CD4-positive, alpha-beta T cell (primary cell): ENCODE measurements at regions of chr17 and their contacts with region 1.

Region 1: GRCh38 chr17:7687908-7688807 is at the start of gene WRAP53:
- DNase-seq: peak; percentile 93 to 98 (median 95)
- ATAC-seq: peak; percentile 75
- H3K4me3 ChIP-seq: peak within 1 kb of the TSS; percentile 72
- H3K4me3 Mint-ChIP-seq: peak within 1 kb of the TSS; percentile 99
- H3K27ac ChIP-seq: peak within 1 kb of the TSS; percentile 96 to 98
- H3K27ac Mint-ChIP-seq: peak within 1 kb of the TSS; percentile 100
- H3K4me1 ChIP-seq: peaks cover 38% of the 10 kb centered on the region
- H3K4me1 Mint-ChIP-seq: peaks cover 46% of the 10 kb centered on the region
- H3K27me3 ChIP-seq: no peaks in the 10 kb centered on the region
- H3K27me3 Mint-ChIP-seq: peaks cover 7% of the 10 kb centered on the region
- CTCF ChIP-seq: peak; percentile 100
- total RNA-seq, gene WRAP53: 3.9 to 4.0 TPM

Region 2: DNA sequence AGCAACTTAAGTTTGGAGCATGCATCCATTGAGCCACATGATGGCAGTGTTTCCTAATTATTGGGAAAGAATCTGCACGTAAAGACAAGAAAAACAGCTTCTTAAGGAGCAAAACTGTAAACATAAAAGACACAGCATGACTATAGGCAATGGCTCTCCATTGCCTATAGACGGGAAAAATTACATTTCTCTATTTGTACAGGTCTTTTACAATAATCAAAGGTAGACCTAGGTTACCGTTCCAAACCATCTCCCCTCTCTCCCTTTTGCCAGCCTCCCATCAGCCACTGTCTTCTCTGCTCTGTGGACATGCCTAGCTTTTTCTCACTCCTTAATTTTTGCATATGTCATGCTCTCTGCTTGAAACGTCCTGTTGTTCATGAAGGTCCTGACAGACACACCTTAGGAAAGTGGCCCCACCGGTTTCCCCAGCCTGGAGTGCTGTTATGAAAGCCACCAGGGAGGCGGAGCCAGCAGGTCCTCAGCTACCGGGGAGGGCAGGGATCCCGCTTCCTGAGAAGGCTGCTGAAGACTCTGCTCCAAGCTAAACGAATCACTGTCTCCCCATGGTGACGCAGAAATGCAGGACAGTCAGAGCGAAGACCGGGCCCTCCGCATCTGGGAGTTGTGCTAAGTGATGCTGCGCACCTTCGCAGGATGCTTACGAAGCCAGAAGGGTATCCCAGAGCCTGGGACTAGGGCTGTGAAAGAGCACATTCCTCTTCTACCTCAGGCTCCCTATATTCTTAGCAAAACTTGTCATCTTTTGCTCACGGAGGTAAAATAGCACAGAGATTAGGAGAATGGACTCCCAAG is 642.0 kb before region 1 on chr17:
- CTCF ChIA-PET with region 1: no interaction called
- POLR2A ChIA-PET with region 1: interaction called, 25 read pairs
- intact Hi-C with region 1: loop called in 1 of 2 experiments (anchors 10 kb)
- DNase-seq: peak in 9 of 14 experiments; percentile 31 to 89 (median 49)
- ATAC-seq: peak; percentile 53
- H3K4me3 ChIP-seq: peak overlapping the region; percentile 55
- H3K4me3 Mint-ChIP-seq: peak overlapping the region; percentile 90
- H3K27ac ChIP-seq: peak overlapping the region; percentile 64 to 68
- H3K27ac Mint-ChIP-seq: peak overlapping the region; percentile 94
- H3K4me1 ChIP-seq: peaks cover 49% of the 10 kb centered on the region
- H3K4me1 Mint-ChIP-seq: peaks cover 44% of the 10 kb centered on the region
- H3K27me3 ChIP-seq: peaks cover 0 to 5% of the 10 kb centered on the region in 2 experiments
- H3K27me3 Mint-ChIP-seq: no peaks in the 10 kb centered on the region
- CTCF ChIP-seq: peak; percentile 80

Region 3: DNA sequence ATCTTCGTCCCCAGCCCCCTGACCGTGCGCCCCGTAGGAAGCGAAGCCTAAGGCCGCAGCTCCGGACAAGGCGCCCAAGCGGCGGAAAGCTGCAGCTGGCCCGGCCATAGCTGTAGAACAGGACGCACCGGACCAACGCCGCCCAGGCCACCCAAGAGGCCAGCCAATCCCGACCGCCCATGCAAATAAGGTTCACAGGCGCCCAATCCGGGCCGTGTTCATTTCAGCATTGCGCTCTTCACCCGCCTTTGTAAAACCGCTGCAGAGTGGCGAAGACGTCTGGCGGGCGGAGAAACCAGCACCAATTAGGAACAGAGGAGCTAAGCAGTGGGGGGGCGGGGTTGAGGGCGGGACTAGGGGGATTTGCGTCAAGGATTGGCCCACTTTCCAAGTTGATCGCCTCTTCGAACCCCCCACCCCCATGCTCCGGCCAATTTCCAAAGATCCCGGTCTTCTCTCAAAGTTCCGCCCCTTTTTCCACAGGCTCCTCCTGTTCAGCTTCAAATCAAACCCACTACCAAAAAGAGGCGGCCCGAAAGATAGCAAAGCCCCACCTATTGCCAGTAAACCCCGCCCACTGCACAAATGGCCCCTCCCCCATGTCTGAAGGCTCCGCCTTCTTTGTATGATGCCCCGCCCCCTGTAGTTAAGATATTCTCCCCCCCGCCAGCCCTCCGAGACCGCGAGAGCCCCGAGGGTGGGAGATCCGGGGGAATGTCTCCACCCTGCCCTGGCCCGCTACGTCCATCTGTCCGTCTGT is 284.0 kb before region 1 on chr17 and contains the start of gene TMEM256:
- CTCF ChIA-PET with region 1: no interaction called
- POLR2A ChIA-PET with region 1: interaction called, 17 read pairs
- intact Hi-C with region 1: no loop called
- DNase-seq: peak; percentile 90 to 99 (median 94)
- ATAC-seq: peak; percentile 88
- H3K4me3 ChIP-seq: peak within 1 kb of the TSS; percentile 77
- H3K4me3 Mint-ChIP-seq: peak within 1 kb of the TSS; percentile 98
- H3K27ac ChIP-seq: peak within 1 kb of the TSS in 1 of 2 donors; percentile 82
- H3K27ac Mint-ChIP-seq: peak within 1 kb of the TSS; percentile 87
- H3K4me1 ChIP-seq: peaks cover 36% of the 10 kb centered on the region
- H3K4me1 Mint-ChIP-seq: peaks cover 31% of the 10 kb centered on the region
- H3K27me3 ChIP-seq: peaks cover 0 to 5% of the 10 kb centered on the region in 2 experiments
- H3K27me3 Mint-ChIP-seq: no peaks in the 10 kb centered on the region
- CTCF ChIP-seq: no peak
- total RNA-seq, gene TMEM256: 29.0 to 29.4 TPM

Region 4: GRCh38 chr17:7561028-7561575 is 127.1 kb before region 1 on chr17:
- CTCF ChIA-PET with region 1: interaction called, 18 read pairs
- POLR2A ChIA-PET with region 1: interaction called, 47 read pairs
- intact Hi-C with region 1: no loop called
- DNase-seq: peak; percentile 62 to 89 (median 77)
- ATAC-seq: peak; percentile 62
- H3K4me3 ChIP-seq: peak overlapping the region; percentile 91
- H3K4me3 Mint-ChIP-seq: peak overlapping the region; percentile 95
- H3K27ac ChIP-seq: peak overlapping the region; percentile 88 to 96
- H3K27ac Mint-ChIP-seq: peak overlapping the region; percentile 93
- H3K4me1 ChIP-seq: peaks cover 66% of the 10 kb centered on the region
- H3K4me1 Mint-ChIP-seq: peaks cover 40% of the 10 kb centered on the region
- H3K27me3 ChIP-seq: no peaks in the 10 kb centered on the region
- H3K27me3 Mint-ChIP-seq: no peaks in the 10 kb centered on the region
- CTCF ChIP-seq: peak; percentile 89

Region 5: DNA sequence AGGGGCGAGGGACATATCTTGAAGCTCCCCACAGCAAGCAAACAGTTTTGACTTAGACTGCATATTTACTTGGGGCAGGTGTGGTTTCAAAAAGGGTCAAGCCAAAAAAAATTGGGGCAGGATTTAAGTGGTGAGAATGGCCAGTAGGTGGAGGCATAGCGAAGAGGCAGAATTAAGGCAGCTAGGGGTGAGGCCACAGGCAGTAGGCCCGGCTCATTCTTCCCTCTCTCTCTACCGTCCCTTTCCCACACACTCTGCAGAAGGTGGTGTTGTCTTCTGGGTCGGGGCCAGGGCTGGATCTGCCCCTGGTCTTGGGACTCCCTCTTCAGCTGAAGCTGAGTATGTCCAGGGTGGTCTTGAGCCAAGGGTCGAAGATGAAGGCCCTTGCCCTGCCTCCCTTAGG is 55.7 kb before region 1 on chr17:
- CTCF ChIA-PET with region 1: interaction called, 24 read pairs
- POLR2A ChIA-PET with region 1: interaction called, 119 read pairs
- intact Hi-C with region 1: loop called (anchors 2 to 5 kb)
- DNase-seq: peak in 5 of 14 experiments; percentile 8 to 69 (median 42)
- ATAC-seq: no peak
- H3K4me3 ChIP-seq: no peak overlapping the region
- H3K4me3 Mint-ChIP-seq: peak overlapping the region; percentile 70
- H3K27ac ChIP-seq: no peak overlapping the region
- H3K27ac Mint-ChIP-seq: no peak overlapping the region
- H3K4me1 ChIP-seq: peaks cover 9% of the 10 kb centered on the region
- H3K4me1 Mint-ChIP-seq: peaks cover 6% of the 10 kb centered on the region
- H3K27me3 ChIP-seq: no peaks in the 10 kb centered on the region
- H3K27me3 Mint-ChIP-seq: no peaks in the 10 kb centered on the region
- CTCF ChIP-seq: no peak

Region 6: GRCh38 chr17:7794075-7794663 is 106.0 kb after region 1 on chr17:
- CTCF ChIA-PET with region 1: no interaction called
- POLR2A ChIA-PET with region 1: no interaction called
- intact Hi-C with region 1: no loop called
- DNase-seq: no peak
- ATAC-seq: no peak
- H3K4me3 ChIP-seq: no peak overlapping the region
- H3K4me3 Mint-ChIP-seq: no peak overlapping the region
- H3K27ac ChIP-seq: no peak overlapping the region
- H3K27ac Mint-ChIP-seq: no peak overlapping the region
- H3K4me1 ChIP-seq: no peaks in the 10 kb centered on the region
- H3K4me1 Mint-ChIP-seq: no peaks in the 10 kb centered on the region
- H3K27me3 ChIP-seq: no peaks in the 10 kb centered on the region
- H3K27me3 Mint-ChIP-seq: no peaks in the 10 kb centered on the region
- CTCF ChIP-seq: no peak

Region 7: DNA sequence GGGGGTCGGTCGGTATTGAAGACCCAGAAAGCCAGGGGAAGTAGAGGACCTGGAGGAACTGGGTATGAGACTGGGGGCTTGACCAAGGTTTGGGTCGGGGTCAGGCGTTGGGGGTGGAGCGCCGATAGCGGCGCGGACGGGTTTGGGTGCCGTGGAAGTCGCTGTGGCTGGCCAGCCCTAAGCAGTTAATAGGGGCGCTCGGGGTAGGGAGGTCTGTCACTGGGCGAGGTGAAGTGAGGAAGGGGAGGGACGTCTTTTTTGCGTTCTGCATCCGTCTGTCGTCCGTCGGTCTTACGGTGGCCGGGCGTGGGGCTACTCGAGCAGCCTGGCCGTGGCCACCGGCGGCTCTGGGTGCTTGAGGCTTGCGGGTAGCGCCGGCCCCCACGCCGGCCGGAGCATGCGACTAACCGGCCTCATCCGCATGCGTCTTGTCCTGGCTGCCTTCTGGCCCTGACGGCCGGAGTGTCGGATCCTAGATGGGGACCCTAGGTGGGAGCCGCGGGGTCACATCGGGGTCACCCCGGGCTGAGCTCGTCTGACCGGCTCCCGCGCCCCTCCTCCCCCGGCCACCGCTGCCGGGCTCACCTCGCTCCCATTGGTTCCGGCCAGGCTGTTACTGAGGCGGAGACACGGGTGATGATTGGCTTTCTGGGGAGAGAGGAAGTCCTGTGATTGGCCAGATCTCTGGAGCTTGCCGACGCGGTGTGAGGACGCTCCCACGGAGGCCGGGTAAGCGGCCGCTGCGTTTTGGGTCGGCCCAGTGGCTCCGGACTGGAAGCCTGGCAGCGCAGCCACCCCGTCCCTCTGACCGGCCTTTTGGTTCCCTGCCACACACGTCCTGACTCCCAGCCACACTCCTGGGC is 156.4 kb after region 1 on chr17:
- CTCF ChIA-PET with region 1: interaction called, 3 read pairs
- POLR2A ChIA-PET with region 1: interaction called, 8 read pairs
- intact Hi-C with region 1: loop called (anchors 5 kb)
- DNase-seq: peak; percentile 56 to 94 (median 73)
- ATAC-seq: peak; percentile 14
- H3K4me3 ChIP-seq: peak overlapping the region; percentile 84
- H3K4me3 Mint-ChIP-seq: peak overlapping the region; percentile 92
- H3K27ac ChIP-seq: peak overlapping the region; percentile 100
- H3K27ac Mint-ChIP-seq: peak overlapping the region; percentile 90
- H3K4me1 ChIP-seq: peaks cover 59% of the 10 kb centered on the region
- H3K4me1 Mint-ChIP-seq: peaks cover 35% of the 10 kb centered on the region
- H3K27me3 ChIP-seq: no peaks in the 10 kb centered on the region
- H3K27me3 Mint-ChIP-seq: peaks cover 10% of the 10 kb centered on the region
- CTCF ChIP-seq: no peak